ENCODE measurements at regions of chr1 and their contacts with region 1.

Region 1: GRCh38 chr1:244599937-244600350 is 53.0 kb upstream of the DESI2 start:
- DNase-seq: no peak

Region 2: GRCh38 chr1:244796718-244797406 is 196.9 kb after region 1 on chr1:
- intact Hi-C with region 1: loop called (anchors 1 kb)
- DNase-seq: no peak